ENCODE measurements at regions of chr10 and their contacts with region 1.

Region 1: GRCh38 chr10:22103701-22104470 is 100.4 kb upstream of the DNAJC1 start:
- DNase-seq: no peak
- ATAC-seq: peak; percentile 86
- H3K4me3 Mint-ChIP-seq: no peak overlapping the region
- H3K27ac Mint-ChIP-seq: no peak overlapping the region
- H3K4me1 Mint-ChIP-seq: no peaks in the 10 kb centered on the region; the same call in 1 of the 2 replicates
- H3K27me3 Mint-ChIP-seq: no peaks in the 10 kb centered on the region
- CTCF ChIP-seq: peak; percentile 53; the same call in 1 of the 2 replicates

Region 2: DNA sequence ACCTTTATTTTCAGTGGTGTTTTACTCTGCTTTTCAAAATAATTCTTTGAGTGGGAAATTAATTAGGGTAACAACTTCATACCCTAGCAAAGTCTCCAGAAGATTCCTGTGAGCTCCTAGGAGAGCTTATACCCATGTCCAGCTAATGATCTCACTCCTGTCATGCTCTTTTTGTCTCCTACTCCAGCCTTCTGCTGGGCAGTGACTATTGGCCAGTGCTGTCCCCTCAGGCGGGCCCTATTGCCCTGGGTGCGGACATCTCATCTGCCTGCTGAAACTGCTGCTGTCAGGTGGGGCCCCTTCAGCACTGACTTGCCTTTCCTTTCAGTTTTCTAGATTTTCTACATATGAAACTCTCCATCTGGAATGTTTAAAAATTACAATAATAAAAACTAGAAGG is 33.7 kb after region 1 on chr10:
- CTCF ChIA-PET with region 1: interaction called, 11 read pairs
- POLR2A ChIA-PET with region 1: no interaction called
- DNase-seq: no peak
- ATAC-seq: no peak
- H3K4me3 Mint-ChIP-seq: no peak overlapping the region
- H3K27ac Mint-ChIP-seq: no peak overlapping the region
- H3K4me1 Mint-ChIP-seq: peaks cover 15% of the 10 kb centered on the region
- H3K27me3 Mint-ChIP-seq: no peaks in the 10 kb centered on the region
- CTCF ChIP-seq: no peak